Mammary epithelial cell (primary cell): ENCODE measurements at regions of chr20 and their contacts with region 1.

Region 1: GRCh38 chr20:47753576-47754387 is 31.5 kb downstream of the SULF2 start:
- DNase-seq: no peak
- H3K4me3 ChIP-seq: no peak overlapping the region
- H3K27ac ChIP-seq: no peak overlapping the region
- H3K4me1 ChIP-seq: no peaks in the 10 kb centered on the region
- H3K27me3 ChIP-seq: no peaks in the 10 kb centered on the region
- CTCF ChIP-seq: no peak

Region 2: DNA sequence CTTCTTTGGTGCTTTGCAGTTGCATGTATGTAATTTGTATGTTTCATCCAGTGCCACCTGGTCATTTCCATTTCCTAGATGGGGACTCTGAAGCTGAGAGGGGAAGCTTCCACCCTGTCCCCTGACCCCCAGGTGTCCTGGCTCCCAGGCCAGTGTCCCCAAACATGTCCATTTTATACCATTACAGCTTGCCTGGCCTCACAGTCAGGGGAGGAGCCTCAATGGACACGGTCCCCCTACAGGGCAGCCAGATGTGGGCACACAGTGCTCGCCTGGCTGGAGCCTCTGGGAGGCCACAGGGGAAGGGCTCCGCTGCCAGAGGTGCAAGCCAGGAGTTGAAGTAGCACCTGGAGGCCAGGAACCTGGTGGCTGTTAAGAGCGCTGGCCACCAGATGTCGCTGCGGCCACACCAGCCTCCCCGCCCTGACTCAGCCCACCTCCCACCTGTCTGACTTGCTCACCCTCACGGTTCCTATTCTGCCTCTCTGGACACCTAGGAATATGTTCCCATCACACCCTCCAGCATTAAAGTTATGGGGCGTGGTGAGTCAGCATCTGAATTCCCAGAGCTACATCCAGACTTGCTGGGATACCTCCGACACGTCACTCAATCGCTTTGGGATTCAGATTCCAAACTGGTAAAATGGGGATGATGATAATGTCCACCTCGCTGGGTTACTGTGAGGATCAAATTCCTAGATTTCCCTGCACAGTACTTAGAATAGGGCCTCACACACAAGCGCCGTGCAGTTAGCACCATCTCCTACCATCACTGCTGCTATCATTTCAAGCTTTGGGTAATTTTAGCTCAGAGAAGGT is 75.9 kb before region 1 on chr20:
- CTCF ChIA-PET with region 1: no interaction called
- dilution Hi-C with region 1: loop called (anchors 5 kb)
- in situ Hi-C with region 1: no loop called
- intact Hi-C with region 1: no loop called
- DNase-seq: peak; percentile 55
- H3K4me3 ChIP-seq: no peak overlapping the region
- H3K27ac ChIP-seq: no peak overlapping the region
- H3K4me1 ChIP-seq: no peaks in the 10 kb centered on the region
- H3K27me3 ChIP-seq: no peaks in the 10 kb centered on the region
- CTCF ChIP-seq: peak; percentile 68 to 79